Mammary epithelial cell (primary cell): ENCODE measurements at regions of chr1 and their contacts with region 1.

Region 1: DNA sequence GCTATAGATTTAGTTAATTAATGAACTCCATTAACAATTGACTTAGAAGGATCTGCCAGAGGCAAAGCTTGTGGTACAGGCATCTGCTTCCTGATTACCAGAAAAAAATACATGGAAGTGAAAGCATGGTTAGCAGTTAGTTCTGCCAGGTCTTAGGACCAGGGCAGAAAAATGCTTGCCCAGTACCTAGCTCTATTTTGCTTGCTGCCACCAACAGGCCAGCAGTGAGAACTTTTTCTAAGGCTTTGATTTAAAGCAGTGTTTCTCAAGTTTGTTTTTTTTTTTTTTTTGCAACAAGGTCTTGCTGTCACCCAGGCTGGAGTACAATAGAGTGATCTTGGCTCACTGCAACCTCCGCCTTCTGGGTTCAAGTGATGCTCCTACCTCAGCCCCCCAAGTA is 16.4 kb upstream of the MTF1 start:
- DNase-seq: peak; percentile 38
- H3K4me3 ChIP-seq: no peak overlapping the region
- H3K27ac ChIP-seq: no peak overlapping the region
- H3K4me1 ChIP-seq: no peaks in the 10 kb centered on the region
- H3K27me3 ChIP-seq: no peaks in the 10 kb centered on the region
- CTCF ChIP-seq: peak; percentile 39 to 61

Region 2: DNA sequence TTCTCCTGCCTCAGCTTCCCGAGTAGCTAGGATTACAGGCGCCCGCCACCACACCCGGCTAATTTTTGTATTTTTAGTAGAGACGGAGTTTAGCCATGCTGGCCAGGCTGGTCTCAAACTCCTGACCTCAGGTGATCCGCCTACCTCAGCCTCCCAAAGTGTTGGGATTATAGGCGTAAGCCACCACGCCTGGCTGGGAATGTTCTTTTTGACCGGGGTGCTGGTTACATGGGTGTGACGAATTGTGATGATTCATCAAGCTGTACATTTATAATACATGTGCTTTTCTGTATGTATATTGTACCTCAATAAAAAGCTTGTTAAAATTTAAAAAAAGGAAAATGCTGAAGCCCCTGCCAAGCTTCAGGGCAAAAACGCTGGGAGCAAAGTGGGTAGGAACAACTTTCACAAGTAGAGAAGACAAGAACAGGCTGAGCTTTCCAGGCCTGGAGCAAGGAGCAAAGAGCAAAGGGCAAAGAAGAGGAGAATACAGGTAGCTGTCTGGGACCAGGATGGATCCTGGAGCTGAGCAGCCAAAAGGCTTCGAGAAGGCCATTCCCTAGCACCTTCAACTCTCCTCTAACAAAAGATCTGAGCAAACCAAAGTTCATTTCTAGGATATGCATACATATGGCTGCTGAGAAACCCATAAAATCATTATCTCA is 47.3 kb before region 1 on chr1:
- CTCF ChIA-PET with region 1: interaction called, 12 read pairs
- dilution Hi-C with region 1: no loop called
- in situ Hi-C with region 1: no loop called
- intact Hi-C with region 1: no loop called
- DNase-seq: no peak
- H3K4me3 ChIP-seq: no peak overlapping the region
- H3K27ac ChIP-seq: no peak overlapping the region
- H3K4me1 ChIP-seq: no peaks in the 10 kb centered on the region
- H3K27me3 ChIP-seq: no peaks in the 10 kb centered on the region
- CTCF ChIP-seq: no peak

Region 3: GRCh38 chr1:37840711-37841110 is 35.1 kb before region 1 on chr1:
- CTCF ChIA-PET with region 1: no interaction called
- dilution Hi-C with region 1: no loop called
- in situ Hi-C with region 1: no loop called
- intact Hi-C with region 1: no loop called
- DNase-seq: no peak
- H3K4me3 ChIP-seq: no peak overlapping the region
- H3K27ac ChIP-seq: no peak overlapping the region
- H3K4me1 ChIP-seq: no peaks in the 10 kb centered on the region
- H3K27me3 ChIP-seq: no peaks in the 10 kb centered on the region
- CTCF ChIP-seq: no peak

Region 4: DNA sequence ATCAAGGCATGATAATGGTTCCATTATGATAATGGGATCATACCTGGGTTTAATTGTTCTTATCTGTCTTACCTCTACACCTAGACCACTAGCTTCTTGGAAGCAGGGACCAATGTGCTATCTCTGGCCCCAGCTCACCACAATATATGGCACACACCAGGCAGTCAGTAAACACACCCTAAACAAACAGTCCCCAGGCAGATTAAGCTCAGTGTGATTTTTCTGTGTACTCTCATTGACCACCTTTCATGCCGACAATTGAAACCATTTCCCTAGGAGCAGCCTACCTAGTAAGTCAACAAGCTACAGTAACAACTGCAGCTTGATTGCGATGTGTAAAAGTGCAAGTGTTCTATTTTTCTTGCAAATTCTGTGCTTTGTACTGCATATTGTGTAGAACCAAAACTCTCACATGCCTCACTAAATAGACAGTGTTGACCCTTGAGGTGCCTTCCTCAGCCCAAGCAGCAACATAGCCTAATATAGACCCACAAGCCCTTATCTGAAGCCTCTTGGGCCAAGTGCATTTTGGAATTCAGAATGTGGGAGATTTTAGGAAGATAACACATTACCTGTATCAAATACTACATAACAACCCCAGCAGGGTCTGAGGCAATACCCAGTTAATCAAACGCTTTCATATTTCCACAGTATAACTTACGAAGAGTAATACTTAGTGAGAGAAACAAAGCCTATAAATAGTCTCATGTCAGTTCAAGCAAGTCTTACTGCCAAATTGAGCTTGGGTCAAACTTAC is 39.1 kb after region 1 on chr1:
- CTCF ChIA-PET with region 1: interaction called, 17 read pairs
- dilution Hi-C with region 1: no loop called
- in situ Hi-C with region 1: no loop called
- intact Hi-C with region 1: no loop called
- DNase-seq: no peak
- H3K4me3 ChIP-seq: no peak overlapping the region
- H3K27ac ChIP-seq: no peak overlapping the region
- H3K4me1 ChIP-seq: no peaks in the 10 kb centered on the region
- H3K27me3 ChIP-seq: no peaks in the 10 kb centered on the region
- CTCF ChIP-seq: no peak

Region 5: DNA sequence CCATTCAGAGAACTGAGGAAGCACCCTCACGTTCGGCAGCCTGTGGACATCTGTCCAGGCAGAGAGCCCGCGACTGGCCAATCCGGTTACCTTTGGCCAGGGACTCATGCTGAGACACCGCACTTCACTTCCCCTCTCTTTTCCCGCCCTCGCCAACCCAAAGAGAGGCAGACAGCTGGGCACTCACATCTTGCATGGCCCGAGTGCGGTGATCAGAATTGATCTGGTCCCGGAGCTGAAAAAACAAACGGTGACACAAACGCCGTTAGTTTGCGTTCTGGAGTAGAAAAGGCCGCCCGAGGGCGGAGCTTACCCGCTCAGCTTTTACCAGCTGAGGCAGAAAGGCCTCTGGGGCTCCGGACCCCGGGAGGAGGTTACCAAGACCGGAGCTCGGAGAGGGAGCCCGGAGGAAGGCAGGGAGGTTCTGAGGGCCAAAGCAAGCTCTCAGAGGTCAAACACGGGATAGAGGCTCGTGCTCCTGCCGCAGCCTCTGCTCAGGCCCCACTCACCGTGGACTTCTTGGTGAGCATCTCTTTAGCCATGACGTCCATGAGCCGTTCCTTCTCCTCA is 113.6 kb after region 1 on chr1:
- CTCF ChIA-PET with region 1: interaction called, 26 read pairs
- dilution Hi-C with region 1: no loop called
- in situ Hi-C with region 1: no loop called
- intact Hi-C with region 1: no loop called
- DNase-seq: peak; percentile 51
- H3K4me3 ChIP-seq: peak overlapping the region; percentile 59 to 99 (median 98)
- H3K27ac ChIP-seq: peak overlapping the region; percentile 81
- H3K4me1 ChIP-seq: peaks cover 14% of the 10 kb centered on the region
- H3K27me3 ChIP-seq: no peaks in the 10 kb centered on the region
- CTCF ChIP-seq: no peak

Region 6: DNA sequence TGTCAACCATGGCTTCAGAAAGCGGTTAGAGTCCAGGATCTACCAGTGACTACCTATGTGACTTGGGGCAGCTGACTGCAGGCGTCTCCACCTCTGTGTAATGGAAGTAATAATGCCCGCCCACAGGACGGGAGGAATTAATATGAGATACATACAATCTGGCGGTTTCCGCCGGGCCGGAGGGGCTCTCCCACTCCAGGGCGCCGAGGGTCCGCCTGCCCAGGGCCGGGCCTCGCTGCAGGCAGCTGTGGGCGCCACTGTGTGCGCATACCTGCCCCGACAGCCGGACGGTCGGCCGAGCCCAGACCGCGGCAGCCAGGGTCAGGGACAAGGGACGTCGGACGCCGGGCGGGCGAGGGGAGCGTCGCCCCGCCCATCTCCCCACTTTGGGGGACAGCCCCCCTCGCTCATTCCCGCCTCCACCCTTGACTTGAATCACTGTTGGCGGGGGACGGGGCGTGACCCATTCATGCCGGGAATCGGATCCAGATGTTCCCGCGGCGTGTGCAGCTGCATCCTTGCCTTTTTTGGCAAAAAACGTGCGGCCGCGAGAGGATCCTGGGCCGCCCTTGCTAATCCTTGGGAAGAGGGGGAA is 120.0 kb after region 1 on chr1:
- CTCF ChIA-PET with region 1: interaction called, 10 read pairs
- dilution Hi-C with region 1: no loop called
- in situ Hi-C with region 1: no loop called
- intact Hi-C with region 1: no loop called
- DNase-seq: no peak
- H3K4me3 ChIP-seq: peak overlapping the region; percentile 36 to 55 (median 51)
- H3K27ac ChIP-seq: peak overlapping the region; percentile 54
- H3K4me1 ChIP-seq: peaks cover 41% of the 10 kb centered on the region
- H3K27me3 ChIP-seq: no peaks in the 10 kb centered on the region
- CTCF ChIP-seq: no peak